Mucosa of descending colon (tissue), 3 donors: ENCODE measurements at regions of chr4 and their contacts with region 1.

Region 1: GRCh38 chr4:173257732-173258717 is 76.1 kb downstream of the HMGB2 start:
- DNase-seq: peak in 2 of 3 donors; percentile 54 to 76
- ATAC-seq: peak; percentile 83
- H3K4me3 ChIP-seq: no peak overlapping the region
- H3K4me1 ChIP-seq: no peaks in the 10 kb centered on the region
- CTCF ChIP-seq: peak; percentile 38

Region 2: GRCh38 chr4:173013232-173013930 is 244.6 kb before region 1 on chr4:
- intact Hi-C with region 1: loop called in 1 of 2 experiments (anchors 10 kb)
- DNase-seq: peak in 1 of 3 donors; percentile 75
- ATAC-seq: peak; percentile 79
- H3K4me3 ChIP-seq: no peak overlapping the region
- H3K4me1 ChIP-seq: no peaks in the 10 kb centered on the region
- CTCF ChIP-seq: peak; percentile 45

Region 3: GRCh38 chr4:173025131-173025530 is 232.9 kb before region 1 on chr4:
- intact Hi-C with region 1: loop called in 1 of 2 experiments (anchors 5 kb)
- DNase-seq: peak in 1 of 3 donors; percentile 89
- ATAC-seq: peak; percentile 90
- H3K4me3 ChIP-seq: no peak overlapping the region
- H3K4me1 ChIP-seq: no peaks in the 10 kb centered on the region
- CTCF ChIP-seq: no peak